Cardiac septum (tissue), 1 donor: ENCODE measurements at regions of chr12 and their contacts with region 1.

Region 1: DNA sequence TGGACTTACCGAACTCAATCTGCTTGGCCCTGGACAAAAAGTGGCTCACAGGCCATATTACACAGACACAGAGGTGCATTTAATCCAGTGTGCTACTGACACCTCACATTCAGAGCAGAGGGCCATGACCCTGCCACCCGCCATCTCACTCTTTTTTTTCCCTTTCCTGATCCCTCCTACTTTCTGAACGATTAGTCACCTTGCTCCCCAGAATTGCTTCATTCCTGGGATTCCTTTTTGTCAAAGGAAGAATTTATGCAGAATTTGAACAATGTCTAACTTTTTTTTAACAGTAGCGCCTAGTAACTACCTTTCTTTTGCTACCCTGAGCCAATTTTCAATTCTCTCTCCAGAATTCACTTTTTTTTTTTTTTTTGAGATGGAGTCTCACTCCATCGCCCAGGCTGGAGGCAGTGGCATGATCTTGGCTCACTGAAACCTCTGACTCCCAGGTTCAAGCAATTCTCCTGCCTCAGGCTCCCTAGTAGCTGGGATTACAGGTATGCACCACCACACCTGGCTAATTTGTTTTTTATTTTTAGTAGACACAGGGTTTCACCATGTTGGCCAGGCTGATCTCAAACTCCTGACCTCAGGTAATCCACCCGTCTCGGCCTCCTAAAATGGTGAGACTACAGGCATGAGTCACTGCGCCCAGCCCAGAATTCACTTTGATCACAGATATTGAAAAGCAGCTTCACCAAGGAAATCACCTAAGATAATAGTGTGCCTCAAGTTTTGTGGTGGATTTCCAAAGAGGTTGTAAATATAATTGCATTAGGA is 4.4 kb downstream of the PKP2 start:
- DNase-seq: no peak

Region 2: GRCh38 chr12:32821710-32822109 is 70.4 kb before region 1 on chr12:
- intact Hi-C with region 1: loop called (anchors 5 kb)
- DNase-seq: no peak